ENCODE measurements at regions of chr10 and their contacts with region 1.

Region 1: GRCh38 chr10:6642876-6643275 is 62.8 kb upstream of the PRKCQ start:
- DNase-seq: peak; percentile 36
- ATAC-seq: peak; percentile 45
- H3K4me3 Mint-ChIP-seq: no peak overlapping the region
- H3K27ac Mint-ChIP-seq: peak overlapping the region; percentile 64
- H3K4me1 Mint-ChIP-seq: peaks cover 44% of the 10 kb centered on the region
- H3K27me3 Mint-ChIP-seq: no peaks in the 10 kb centered on the region

Region 2: DNA sequence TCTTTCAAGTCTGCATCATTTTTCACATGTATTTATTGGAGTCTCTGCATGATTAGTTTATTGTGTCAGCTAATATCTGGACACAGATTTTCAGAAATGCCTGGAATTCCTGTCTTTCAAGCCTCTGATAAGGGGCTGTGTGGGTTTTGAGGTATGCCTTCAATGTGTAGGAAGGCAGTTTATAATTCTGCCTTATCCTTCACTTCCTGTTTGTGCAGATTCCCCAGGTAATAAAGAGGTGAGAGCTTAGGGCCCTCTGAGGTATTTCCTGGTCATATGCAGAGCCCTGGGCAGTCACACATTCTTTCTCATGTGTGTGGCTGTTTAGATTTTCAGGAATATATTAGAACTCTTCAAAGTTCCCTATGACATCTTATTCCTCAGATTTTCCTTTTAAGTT is 16.6 kb after region 1 on chr10:
- CTCF ChIA-PET with region 1: interaction called, 23 read pairs
- POLR2A ChIA-PET with region 1: no interaction called
- DNase-seq: no peak
- ATAC-seq: no peak
- H3K4me3 Mint-ChIP-seq: no peak overlapping the region
- H3K27ac Mint-ChIP-seq: no peak overlapping the region
- H3K4me1 Mint-ChIP-seq: peaks cover 20% of the 10 kb centered on the region
- H3K27me3 Mint-ChIP-seq: peaks cover 2% of the 10 kb centered on the region